AG04449 (cell line): ENCODE measurements at regions of chr2 and their contacts with region 1.

Region 1: DNA sequence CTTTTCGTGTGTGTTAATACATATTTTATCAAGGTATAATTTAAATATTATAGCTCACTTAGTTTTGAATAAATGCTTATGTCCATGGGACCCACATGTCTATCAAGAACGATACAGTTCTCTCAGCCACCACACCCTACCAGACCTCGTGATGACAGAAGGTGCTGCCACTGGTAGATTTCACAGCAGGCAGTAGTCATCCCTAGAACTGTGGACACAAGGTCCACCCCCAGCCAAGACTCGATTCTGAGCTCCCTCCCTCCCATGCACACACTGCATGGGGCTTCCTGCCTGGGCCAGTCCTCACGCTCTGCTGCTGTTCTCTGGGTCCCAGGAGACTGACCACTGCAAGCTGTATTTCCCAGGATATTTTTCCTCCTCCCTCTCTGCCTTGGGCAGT is 26.5 kb upstream of the CREB1 start:
- DNase-seq: no peak
- H3K4me3 ChIP-seq: no peak overlapping the region
- CTCF ChIP-seq: no peak

Region 2: DNA sequence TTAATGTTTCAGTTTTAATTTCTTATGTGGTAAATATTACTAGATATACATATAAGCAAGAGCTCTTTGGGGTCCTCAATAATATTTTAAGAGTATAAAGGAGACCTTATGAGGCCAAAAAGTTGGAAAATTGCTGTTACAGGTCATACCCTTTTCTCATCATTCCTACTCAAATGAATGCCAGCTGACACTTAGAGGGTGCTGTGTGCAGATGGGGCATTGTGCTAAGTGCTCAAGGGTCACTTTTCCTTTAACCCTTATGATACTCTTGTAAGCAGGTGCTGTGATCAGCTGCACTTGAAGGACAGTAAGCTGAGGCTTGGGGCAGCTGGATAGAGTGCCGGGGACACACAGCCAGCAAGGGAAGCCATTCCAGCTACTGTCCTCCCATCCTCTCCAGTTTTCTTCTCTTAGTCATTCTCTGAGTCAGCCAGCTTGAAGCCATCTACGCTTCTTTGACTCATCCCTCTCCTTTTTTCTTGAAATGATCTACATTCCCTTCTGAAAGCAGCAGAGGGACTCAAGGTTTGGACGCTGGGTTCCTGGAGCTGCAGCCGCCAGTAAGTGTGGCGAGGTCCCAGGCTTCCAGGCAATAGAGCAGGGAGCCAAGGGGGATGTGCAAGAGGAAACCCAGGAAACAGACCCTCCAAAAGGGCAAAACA is 15.5 kb before region 1 on chr2:
- CTCF ChIA-PET with region 1: interaction called, 21 read pairs
- POLR2A ChIA-PET with region 1: interaction called, 9 read pairs
- DNase-seq: peak; percentile 75
- H3K4me3 ChIP-seq: no peak overlapping the region
- CTCF ChIP-seq: peak; percentile 48

Region 3: DNA sequence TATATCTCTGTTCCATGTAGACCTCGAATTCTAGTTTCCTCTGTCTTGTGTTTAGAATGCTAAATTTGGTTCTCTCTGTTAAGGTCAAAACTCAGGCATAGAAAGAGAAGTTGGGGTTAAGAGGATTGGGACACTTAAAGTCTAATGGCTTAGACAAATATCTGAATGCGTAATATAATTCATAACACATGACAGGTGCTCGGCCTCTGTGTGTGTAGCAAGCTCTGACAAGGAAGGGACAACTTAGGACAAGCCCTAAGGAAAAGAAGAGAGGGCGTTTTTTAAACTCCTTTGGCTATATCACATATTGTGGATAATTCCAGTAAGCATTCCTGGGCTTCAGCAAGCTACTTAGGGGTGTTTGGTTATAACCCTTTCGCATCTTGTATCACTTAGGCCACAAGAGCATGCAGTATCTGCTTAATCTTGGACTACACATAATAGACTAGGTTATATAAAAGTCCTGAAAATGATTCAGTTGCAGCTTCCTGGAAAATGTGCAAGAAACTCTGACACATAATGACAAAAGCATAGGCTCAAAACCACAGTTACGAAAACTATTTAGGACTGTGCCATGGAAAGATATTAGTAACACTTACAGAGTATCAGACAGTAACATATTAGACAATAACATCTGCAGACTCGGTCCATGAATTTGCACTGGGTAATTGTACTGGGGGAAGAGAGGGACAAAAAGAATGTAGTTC is 10.5 kb after region 1 on chr2:
- CTCF ChIA-PET with region 1: interaction called, 5 read pairs
- POLR2A ChIA-PET with region 1: interaction called, 17 read pairs
- DNase-seq: peak; percentile 99
- H3K4me3 ChIP-seq: no peak overlapping the region
- CTCF ChIP-seq: no peak